ENCODE measurements at regions of chr20 and their contacts with region 1.

Region 1: GRCh38 chr20:45362804-45363610 is at the start of gene SYS1:
- DNase-seq: peak; percentile 100
- H3K4me3 ChIP-seq: peak within 1 kb of the TSS; percentile 93
- H3K4me3 Mint-ChIP-seq: peak within 1 kb of the TSS; percentile 87
- H3K27ac Mint-ChIP-seq: peak within 1 kb of the TSS; percentile 91
- H3K4me1 ChIP-seq: peaks cover 46% of the 10 kb centered on the region
- H3K4me1 Mint-ChIP-seq: peaks cover 46% of the 10 kb centered on the region
- H3K27me3 ChIP-seq: no peaks in the 10 kb centered on the region
- H3K27me3 Mint-ChIP-seq: no peaks in the 10 kb centered on the region
- CTCF ChIP-seq: peak; percentile 98
- total RNA-seq, gene SYS1: 62.1 and 67.1 TPM in 2 replicates

Region 2: GRCh38 chr20:45341939-45342859 is 20.8 kb before region 1 on chr20:
- CTCF ChIA-PET with region 1: interaction called, 50 read pairs
- POLR2A ChIA-PET with region 1: interaction called, 229 read pairs
- intact Hi-C with region 1: loop called (anchors 1 kb)
- DNase-seq: peak; percentile 90 to 93
- H3K4me3 ChIP-seq: peak overlapping the region; percentile 24
- H3K4me3 Mint-ChIP-seq: peak overlapping the region; percentile 97
- H3K27ac Mint-ChIP-seq: peak overlapping the region; percentile 77
- H3K4me1 ChIP-seq: peaks cover 99% of the 10 kb centered on the region
- H3K4me1 Mint-ChIP-seq: peaks cover 95% of the 10 kb centered on the region
- H3K27me3 ChIP-seq: no peaks in the 10 kb centered on the region
- H3K27me3 Mint-ChIP-seq: no peaks in the 10 kb centered on the region
- CTCF ChIP-seq: no peak

Region 3: DNA sequence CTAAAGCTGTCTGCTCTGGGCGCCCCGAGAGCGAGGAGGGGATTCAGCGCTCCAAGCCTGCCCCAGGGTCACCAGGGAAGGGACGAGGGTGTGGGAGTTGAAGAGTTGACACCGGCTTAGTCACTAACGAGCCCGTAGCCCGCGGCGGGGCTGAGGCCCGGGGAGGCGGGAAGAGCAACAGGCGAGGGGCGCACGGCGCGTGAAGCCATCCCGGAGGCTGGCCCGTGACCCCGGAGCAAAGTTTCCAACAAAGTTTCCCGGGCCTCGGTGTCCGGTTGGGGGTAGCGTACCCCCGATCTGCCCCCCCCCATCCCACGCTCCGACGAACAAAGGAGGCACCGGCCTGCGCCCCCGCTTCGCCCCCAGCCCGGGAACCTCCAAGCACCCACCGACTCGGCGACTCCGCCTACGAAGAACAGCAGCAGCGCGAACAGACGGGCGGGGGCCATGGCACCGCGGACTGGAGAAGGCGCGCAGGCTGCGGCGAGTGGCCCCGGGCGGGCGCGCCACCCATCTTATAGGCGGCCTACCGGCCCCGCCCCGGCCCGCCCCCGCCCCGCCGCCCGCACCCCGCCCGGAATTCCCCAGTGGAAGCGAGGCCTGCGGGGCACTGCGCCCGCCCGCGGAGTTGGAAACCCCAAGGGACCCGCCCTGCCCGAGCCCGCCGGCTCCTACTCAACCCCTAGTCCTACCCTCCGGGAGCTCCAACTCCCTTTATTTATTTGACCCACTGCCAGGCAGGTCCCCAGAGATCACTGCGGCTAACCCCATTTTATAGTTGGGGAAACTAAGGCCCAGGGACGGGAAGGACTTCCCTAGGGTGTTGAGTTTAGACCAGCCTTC is 14.8 kb before region 1 on chr20 and contains the start of gene SDC4:
- CTCF ChIA-PET with region 1: interaction called, 50 read pairs
- POLR2A ChIA-PET with region 1: interaction called, 229 read pairs
- intact Hi-C with region 1: loop called (anchors 1 kb)
- DNase-seq: peak; percentile 83 to 94
- H3K4me3 ChIP-seq: peak within 1 kb of the TSS; percentile 88
- H3K4me3 Mint-ChIP-seq: peak within 1 kb of the TSS; percentile 97
- H3K27ac Mint-ChIP-seq: peak within 1 kb of the TSS; percentile 77
- H3K4me1 ChIP-seq: peaks cover 45% of the 10 kb centered on the region
- H3K4me1 Mint-ChIP-seq: peaks cover 47% of the 10 kb centered on the region
- H3K27me3 ChIP-seq: no peaks in the 10 kb centered on the region
- H3K27me3 Mint-ChIP-seq: no peaks in the 10 kb centered on the region
- CTCF ChIP-seq: no peak
- total RNA-seq, gene SDC4: 227 and 242 TPM in 2 replicates

Region 4: GRCh38 chr20:45373353-45374100 is 10.5 kb after region 1 on chr20:
- CTCF ChIA-PET with region 1: interaction called, 28 read pairs
- POLR2A ChIA-PET with region 1: interaction called, 3 read pairs
- intact Hi-C with region 1: no loop called
- DNase-seq: peak; percentile 85 to 90
- H3K4me3 ChIP-seq: no peak overlapping the region
- H3K4me3 Mint-ChIP-seq: peak overlapping the region; percentile 64
- H3K27ac Mint-ChIP-seq: no peak overlapping the region
- H3K4me1 ChIP-seq: no peaks in the 10 kb centered on the region
- H3K4me1 Mint-ChIP-seq: no peaks in the 10 kb centered on the region
- H3K27me3 ChIP-seq: no peaks in the 10 kb centered on the region
- H3K27me3 Mint-ChIP-seq: no peaks in the 10 kb centered on the region
- CTCF ChIP-seq: peak; percentile 90 to 93

Region 5: GRCh38 chr20:45415774-45416637 is 53.0 kb after region 1 on chr20 and contains the start of gene PIGT:
- CTCF ChIA-PET with region 1: interaction called, 15 read pairs
- POLR2A ChIA-PET with region 1: interaction called, 29 read pairs
- intact Hi-C with region 1: loop called (anchors 1 kb)
- DNase-seq: peak; percentile 95
- H3K4me3 ChIP-seq: peak within 1 kb of the TSS; percentile 89
- H3K4me3 Mint-ChIP-seq: peak within 1 kb of the TSS; percentile 87
- H3K27ac Mint-ChIP-seq: peak within 1 kb of the TSS; percentile 92
- H3K4me1 ChIP-seq: peaks cover 13% of the 10 kb centered on the region; the same call in 1 of the 2 replicates
- H3K4me1 Mint-ChIP-seq: peaks cover 6% of the 10 kb centered on the region
- H3K27me3 ChIP-seq: no peaks in the 10 kb centered on the region
- H3K27me3 Mint-ChIP-seq: no peaks in the 10 kb centered on the region
- CTCF ChIP-seq: peak in 1 of 2 experiments; percentile 30
- total RNA-seq, gene PIGT: 239 and 259 TPM in 2 replicates

Region 6: DNA sequence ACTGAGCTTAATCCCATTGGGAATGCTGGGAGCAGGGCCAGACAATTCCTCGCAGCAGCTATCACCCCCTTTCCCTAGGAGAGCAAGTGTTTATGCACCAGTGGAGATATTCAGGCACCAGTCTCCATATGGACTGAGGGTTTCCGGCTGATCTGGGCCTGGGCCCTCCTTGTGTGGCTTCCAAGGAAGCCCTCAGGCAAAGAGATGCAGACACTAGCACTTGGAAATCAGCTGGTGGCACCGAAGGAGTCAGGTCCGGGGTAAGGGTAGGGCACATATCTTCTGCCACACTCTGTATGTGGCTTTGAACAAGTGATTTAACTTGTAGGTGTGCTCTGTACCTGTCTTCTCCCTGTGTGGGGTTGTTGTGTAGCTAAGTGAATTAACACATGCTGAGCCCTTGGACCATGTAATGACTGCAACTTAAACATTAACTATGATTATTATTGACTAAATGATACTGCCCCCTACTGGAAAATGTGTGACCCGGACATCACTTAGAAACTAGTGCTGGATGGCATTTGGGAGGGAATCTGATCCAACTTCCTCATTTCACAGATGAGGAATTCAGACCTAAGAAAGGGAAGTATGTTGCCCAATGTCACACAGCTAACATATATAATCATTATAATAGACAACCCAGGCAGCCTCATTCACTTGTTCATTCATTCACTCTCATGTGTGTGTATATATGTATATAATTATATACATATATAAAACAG is 87.3 kb after region 1 on chr20:
- CTCF ChIA-PET with region 1: interaction called, 10 read pairs
- POLR2A ChIA-PET with region 1: interaction called, 3 read pairs
- intact Hi-C with region 1: no loop called
- DNase-seq: peak in 1 of 2 experiments; percentile 61
- H3K4me3 ChIP-seq: no peak overlapping the region
- H3K4me3 Mint-ChIP-seq: no peak overlapping the region
- H3K27ac Mint-ChIP-seq: no peak overlapping the region
- H3K4me1 ChIP-seq: peaks cover 14% of the 10 kb centered on the region
- H3K4me1 Mint-ChIP-seq: peaks cover 12% of the 10 kb centered on the region
- H3K27me3 ChIP-seq: no peaks in the 10 kb centered on the region
- H3K27me3 Mint-ChIP-seq: no peaks in the 10 kb centered on the region
- CTCF ChIP-seq: peak; percentile 64 to 82

Region 7: GRCh38 chr20:45564760-45565276 is 201.8 kb after region 1 on chr20:
- CTCF ChIA-PET with region 1: no interaction called
- POLR2A ChIA-PET with region 1: no interaction called
- intact Hi-C with region 1: no loop called
- DNase-seq: no peak
- H3K4me3 ChIP-seq: no peak overlapping the region
- H3K4me3 Mint-ChIP-seq: no peak overlapping the region
- H3K27ac Mint-ChIP-seq: no peak overlapping the region
- H3K4me1 ChIP-seq: no peaks in the 10 kb centered on the region
- H3K4me1 Mint-ChIP-seq: no peaks in the 10 kb centered on the region
- H3K27me3 ChIP-seq: no peaks in the 10 kb centered on the region; the same call in 1 of the 2 replicates
- H3K27me3 Mint-ChIP-seq: peaks cover 14% of the 10 kb centered on the region
- CTCF ChIP-seq: no peak

Region 8: DNA sequence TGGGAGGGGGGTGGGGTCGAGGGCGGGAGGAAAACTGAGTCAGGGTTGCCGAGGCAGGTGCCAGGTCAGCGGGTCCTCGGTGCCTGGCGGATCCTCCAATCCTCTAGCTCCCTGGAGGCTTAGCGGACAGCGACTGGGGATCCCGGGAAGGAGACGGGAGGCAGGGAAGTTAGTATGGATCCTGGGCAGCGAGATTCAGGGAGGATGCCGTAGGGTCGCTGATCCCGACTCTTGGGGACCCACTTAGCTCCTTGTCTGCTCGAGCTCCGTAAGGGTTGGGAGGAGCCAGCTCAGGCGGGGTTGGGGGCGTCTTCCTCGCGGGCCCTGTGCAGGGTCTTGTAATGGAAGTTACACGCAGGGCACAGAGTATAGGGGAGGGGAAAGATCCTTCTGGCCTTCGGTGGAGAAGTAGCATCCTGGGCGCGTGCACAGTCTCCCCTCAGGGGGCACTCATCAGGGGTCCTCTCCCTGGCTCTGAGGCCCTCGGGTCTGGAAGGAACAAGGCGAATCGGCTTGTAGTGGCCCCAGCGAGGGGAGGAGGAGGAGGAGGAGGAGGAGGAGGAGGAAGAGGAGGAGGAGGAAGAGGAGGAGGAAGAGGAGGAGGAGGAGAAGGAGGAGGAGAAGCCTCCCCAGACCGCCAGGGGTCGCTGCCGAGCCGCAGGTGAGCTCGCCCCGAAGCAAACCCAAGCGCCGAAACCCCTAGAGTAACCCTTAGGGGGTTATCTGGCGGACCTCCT is 659.6 kb after region 1 on chr20:
- CTCF ChIA-PET with region 1: no interaction called
- POLR2A ChIA-PET with region 1: no interaction called
- intact Hi-C with region 1: no loop called
- DNase-seq: peak; percentile 69 to 80
- H3K4me3 ChIP-seq: peak overlapping the region; percentile 43
- H3K4me3 Mint-ChIP-seq: peak overlapping the region; percentile 56
- H3K27ac Mint-ChIP-seq: no peak overlapping the region
- H3K4me1 ChIP-seq: no peaks in the 10 kb centered on the region
- H3K4me1 Mint-ChIP-seq: no peaks in the 10 kb centered on the region
- H3K27me3 ChIP-seq: peaks cover under 1% of the 10 kb centered on the region; the same call in 1 of the 2 replicates
- H3K27me3 Mint-ChIP-seq: peaks cover 28% of the 10 kb centered on the region
- CTCF ChIP-seq: peak; percentile 87 to 97